H1 (cell line): ENCODE measurements at regions of chr15 and their contacts with region 1.

Region 1: DNA sequence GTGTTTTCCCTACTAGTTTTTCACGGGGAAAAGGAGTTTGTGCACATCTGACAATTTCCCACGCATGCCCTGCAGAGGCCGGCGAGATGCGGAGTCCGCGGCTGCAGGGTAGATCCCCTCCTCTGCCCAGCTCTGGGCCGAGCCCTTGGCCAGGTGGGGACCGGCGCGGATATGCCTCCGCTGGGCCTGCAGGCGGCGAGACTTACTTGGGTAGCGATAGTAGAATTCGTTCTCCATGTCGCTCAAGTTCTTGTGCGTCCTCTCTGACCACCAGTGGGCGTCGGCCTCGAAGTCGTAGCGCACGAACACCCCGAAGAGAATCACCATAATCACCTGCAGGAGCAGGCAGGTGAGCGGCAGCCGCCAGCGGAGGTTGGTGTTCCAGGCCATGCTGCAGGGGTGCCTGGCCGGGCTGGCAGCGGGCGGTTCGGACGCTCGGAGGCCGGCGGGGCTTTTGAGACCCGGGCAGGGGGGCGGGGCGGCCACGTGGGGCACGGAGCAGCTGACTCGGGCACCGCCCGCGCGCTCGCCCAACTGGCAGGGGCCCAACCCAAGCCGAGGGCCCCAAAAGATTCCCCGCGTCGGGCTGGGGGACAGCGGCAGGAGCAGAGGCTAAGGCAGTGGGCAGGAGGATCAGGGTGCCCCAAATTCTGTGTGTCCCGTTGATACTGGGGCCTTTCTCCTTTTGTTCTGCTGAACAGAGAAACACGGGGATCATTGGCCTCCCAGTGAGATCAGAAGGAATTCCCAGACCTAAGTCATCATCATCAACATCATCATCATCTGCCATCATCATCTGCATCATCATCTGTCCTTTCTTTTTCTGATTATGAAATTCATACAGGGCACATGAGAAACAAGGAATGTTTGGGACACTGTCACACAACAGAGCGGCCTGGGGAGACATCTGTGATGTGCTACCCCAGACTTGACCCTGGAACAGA is at the start of gene RHCG:
- DNase-seq: peak; percentile 69 to 83
- H3K4me3 ChIP-seq: peak within 1 kb of the TSS; percentile 30 to 62 (median 48)
- H3K27ac ChIP-seq: no peak within 1 kb of the TSS
- H3K4me1 ChIP-seq: peaks cover 0 to 6% (median 4%) of the 10 kb centered on the region in 4 experiments; a peak in 6 of 7 replicates
- H3K27me3 ChIP-seq: peaks cover 2 to 25% (median 19%) of the 10 kb centered on the region in 4 experiments
- CTCF ChIP-seq: peak; percentile 81 to 96 (median 88)
- EP300 ChIP-seq: no peak
- POLR2A ChIP-seq: peak in 1 of 2 experiments; percentile 39; a peak in 1 of 3 replicates
- RAD21 ChIP-seq: peak; percentile 58 to 61
- total RNA-seq, gene RHCG: 0.46 TPM in 1 of 2 replicates, not detected in the other

Region 2: GRCh38 chr15:89442671-89443307 is 53.6 kb before region 1 on chr15:
- CTCF ChIA-PET with region 1: interaction called, 128 read pairs
- POLR2A ChIA-PET with region 1: no interaction called
- DNase-seq: peak; percentile 53 to 98
- H3K4me3 ChIP-seq: no peak overlapping the region
- H3K27ac ChIP-seq: no peak overlapping the region
- H3K4me1 ChIP-seq: peaks cover 2 to 18% (median 13%) of the 10 kb centered on the region in 4 experiments
- H3K27me3 ChIP-seq: peaks cover 0 to 2% (median 0%) of the 10 kb centered on the region in 4 experiments; a peak in 3 of 7 replicates
- CTCF ChIP-seq: peak; percentile 77 to 90 (median 80)
- EP300 ChIP-seq: no peak
- POLR2A ChIP-seq: no peak
- RAD21 ChIP-seq: peak; percentile 84 to 91

Region 3: DNA sequence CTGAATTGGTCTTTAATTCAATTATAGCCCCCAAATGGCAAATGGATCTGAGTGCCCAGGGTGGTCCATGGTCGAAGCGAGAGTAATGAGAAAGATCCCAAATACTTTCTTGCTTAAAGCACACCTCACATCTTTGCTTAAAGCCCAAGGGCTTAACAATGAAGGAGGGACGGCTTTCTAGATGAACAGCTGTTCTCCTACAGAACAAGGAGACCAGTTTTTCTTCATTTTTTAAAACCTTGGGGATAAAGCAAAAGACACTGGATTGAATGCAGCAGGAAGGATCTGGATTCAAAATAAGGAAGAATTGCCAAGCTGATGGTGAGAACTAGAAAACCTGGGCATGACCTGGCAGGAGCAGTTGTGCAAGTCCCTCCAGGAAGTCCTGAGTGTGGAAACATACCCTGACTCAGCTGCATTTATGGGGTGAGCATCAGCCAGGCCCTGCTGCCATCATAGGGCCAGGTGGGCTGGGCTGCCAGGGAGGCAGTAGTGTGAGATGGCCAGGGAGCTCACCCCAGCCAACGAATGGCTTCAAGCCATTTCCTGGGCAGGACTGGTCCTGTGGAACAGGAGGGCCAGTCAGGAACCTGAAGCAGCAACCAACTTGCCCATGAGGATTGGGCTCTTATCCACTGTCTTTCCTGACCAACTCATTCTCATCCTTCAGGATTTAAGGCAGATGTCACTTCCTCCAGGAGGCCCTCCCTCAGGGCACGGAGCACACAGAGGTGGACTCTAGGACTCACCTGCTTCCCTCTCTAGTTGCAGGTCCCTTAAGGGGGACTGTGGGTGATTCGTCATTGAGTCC is 18.4 kb after region 1 on chr15:
- CTCF ChIA-PET with region 1: interaction called, 15 read pairs
- POLR2A ChIA-PET with region 1: no interaction called
- DNase-seq: no peak
- H3K4me3 ChIP-seq: no peak overlapping the region
- H3K27ac ChIP-seq: no peak overlapping the region
- H3K4me1 ChIP-seq: no peaks in the 10 kb centered on the region
- H3K27me3 ChIP-seq: no peaks in the 10 kb centered on the region; a peak in 1 of 7 replicates
- CTCF ChIP-seq: no peak
- EP300 ChIP-seq: no peak
- POLR2A ChIP-seq: no peak
- RAD21 ChIP-seq: no peak

Region 4: GRCh38 chr15:89531796-89532537 is 35.5 kb after region 1 on chr15:
- CTCF ChIA-PET with region 1: interaction called, 11 read pairs
- POLR2A ChIA-PET with region 1: no interaction called
- DNase-seq: no peak
- H3K4me3 ChIP-seq: no peak overlapping the region
- H3K27ac ChIP-seq: no peak overlapping the region
- H3K4me1 ChIP-seq: peaks cover 0 to 6% (median 1%) of the 10 kb centered on the region in 4 experiments; a peak in 3 of 7 replicates
- H3K27me3 ChIP-seq: no peaks in the 10 kb centered on the region
- CTCF ChIP-seq: no peak
- EP300 ChIP-seq: no peak
- POLR2A ChIP-seq: no peak
- RAD21 ChIP-seq: no peak

Region 5: DNA sequence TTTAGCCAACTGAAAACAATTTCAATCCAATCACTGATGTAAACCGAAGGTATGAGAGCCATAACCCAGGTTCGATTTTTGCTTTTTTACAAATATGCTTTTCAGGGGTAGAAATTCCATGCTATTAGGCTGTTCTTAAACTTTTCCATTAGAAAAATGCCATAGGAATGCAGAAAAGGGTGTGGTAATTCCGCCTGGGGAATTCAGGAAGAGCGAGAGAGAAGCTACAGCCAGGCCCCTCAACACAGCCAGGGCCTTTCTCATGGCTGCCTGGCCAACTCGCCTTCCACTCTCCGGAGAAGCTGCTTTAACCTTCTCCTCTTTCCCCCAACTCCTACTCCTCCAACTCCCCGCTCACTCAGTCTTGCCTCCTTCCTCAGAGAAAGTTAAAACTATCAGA is 69.7 kb after region 1 on chr15:
- CTCF ChIA-PET with region 1: interaction called, 32 read pairs
- POLR2A ChIA-PET with region 1: no interaction called
- DNase-seq: no peak
- H3K4me3 ChIP-seq: no peak overlapping the region
- H3K27ac ChIP-seq: no peak overlapping the region
- H3K4me1 ChIP-seq: no peaks in the 10 kb centered on the region; a peak in 1 of 7 replicates
- H3K27me3 ChIP-seq: no peaks in the 10 kb centered on the region
- CTCF ChIP-seq: no peak
- EP300 ChIP-seq: no peak
- POLR2A ChIP-seq: no peak
- RAD21 ChIP-seq: no peak

Region 6: DNA sequence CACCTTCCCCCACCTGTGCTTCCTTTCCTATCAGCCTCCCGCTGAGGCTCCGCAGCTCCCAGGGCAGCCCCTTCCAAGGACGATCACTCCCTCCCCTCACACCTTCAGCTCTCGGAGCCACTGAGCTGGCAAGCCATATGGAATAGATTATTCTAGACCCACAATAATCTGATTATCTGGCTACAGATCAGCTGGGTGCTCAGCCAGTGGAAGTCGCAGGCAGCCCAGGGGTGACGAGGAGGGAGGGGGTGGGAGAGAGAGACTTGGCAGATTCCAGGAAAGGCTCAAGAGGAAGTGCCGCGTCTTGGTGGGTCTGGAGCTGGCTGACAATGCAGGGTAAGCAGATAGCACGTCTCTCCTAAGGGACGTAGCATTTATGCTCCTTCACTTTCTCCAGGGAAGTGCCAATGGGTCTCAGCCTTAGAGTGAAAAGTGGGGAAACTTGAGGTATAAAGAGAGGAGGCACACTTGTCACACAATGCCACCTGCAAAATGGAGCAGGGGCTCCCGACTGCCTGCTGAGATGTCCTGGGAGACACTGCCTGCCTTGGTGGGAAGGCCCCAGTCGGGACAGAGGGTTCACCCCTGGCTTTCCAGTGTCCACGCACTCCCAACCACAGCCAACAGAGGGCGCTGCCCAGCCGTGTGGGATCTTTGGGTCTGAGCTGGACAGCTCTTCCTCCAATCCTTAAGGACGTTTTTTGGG is 264.0 kb after region 1 on chr15:
- CTCF ChIA-PET with region 1: no interaction called
- POLR2A ChIA-PET with region 1: no interaction called
- DNase-seq: peak; percentile 53 to 99
- H3K4me3 ChIP-seq: no peak overlapping the region
- H3K27ac ChIP-seq: no peak overlapping the region
- H3K4me1 ChIP-seq: peaks cover 0 to 2% (median 0%) of the 10 kb centered on the region in 4 experiments; a peak in 3 of 7 replicates
- H3K27me3 ChIP-seq: no peaks in the 10 kb centered on the region; a peak in 2 of 7 replicates
- CTCF ChIP-seq: peak; percentile 95 to 97 (median 97)
- EP300 ChIP-seq: no peak
- POLR2A ChIP-seq: no peak
- RAD21 ChIP-seq: peak; percentile 95